WTC11 (cell line): ENCODE measurements at regions of chr4 and their contacts with region 1.

Region 1: DNA sequence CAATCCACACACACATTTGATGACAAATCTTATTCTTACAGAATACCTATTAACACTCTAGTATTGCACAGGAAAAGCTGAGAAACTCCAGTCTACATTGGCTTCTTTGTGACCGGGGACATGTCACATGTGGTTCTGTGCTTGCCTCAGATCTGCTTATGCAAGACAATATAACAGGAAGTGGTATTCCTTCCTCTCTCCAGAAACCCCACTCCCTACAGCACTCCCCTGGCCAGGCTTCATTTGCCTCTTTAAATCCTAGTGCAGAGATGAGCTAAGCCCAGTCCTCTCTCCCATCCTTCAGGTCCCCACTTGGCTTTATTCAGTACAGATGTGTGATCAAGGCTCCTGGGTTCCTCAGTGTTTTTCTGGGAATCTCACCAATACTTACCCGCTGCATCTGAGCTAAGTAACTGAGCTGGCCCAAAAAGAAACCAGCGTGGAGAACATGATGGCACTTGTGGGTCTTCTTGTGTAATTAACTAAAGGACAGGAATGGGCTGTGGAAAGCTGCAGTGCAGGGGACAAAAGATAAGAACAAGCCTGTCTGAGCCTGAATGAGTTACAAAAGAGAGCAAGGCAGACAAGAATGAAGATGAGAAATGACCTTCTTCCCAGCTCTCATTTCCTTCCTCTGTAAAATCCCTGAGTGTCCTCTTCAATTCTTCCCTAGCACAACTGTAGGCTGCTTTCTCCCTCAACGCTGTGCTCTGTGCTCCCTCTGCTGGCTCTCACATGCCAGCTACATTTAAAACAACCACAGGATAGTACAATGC is 105.6 kb downstream of the HNRNPD start:
- DNase-seq: peak; percentile 52
- ATAC-seq: peak; percentile 97
- H3K4me3 Mint-ChIP-seq: no peak overlapping the region
- H3K27ac Mint-ChIP-seq: peak overlapping the region; percentile 55
- H3K4me1 Mint-ChIP-seq: peaks cover 14% of the 10 kb centered on the region
- H3K27me3 Mint-ChIP-seq: peaks cover 6% of the 10 kb centered on the region
- CTCF ChIP-seq: peak; percentile 47; the same call in 1 of the 2 replicates

Region 2: GRCh38 chr4:81913427-81913879 is 354.8 kb before region 1 on chr4:
- CTCF ChIA-PET with region 1: interaction called, 23 read pairs
- POLR2A ChIA-PET with region 1: no interaction called
- DNase-seq: peak; percentile 79
- ATAC-seq: peak; percentile 96
- H3K4me3 Mint-ChIP-seq: peak overlapping the region; percentile 54
- H3K27ac Mint-ChIP-seq: no peak overlapping the region; the same call in 1 of the 2 replicates
- H3K4me1 Mint-ChIP-seq: peaks cover 9% of the 10 kb centered on the region
- H3K27me3 Mint-ChIP-seq: no peaks in the 10 kb centered on the region
- CTCF ChIP-seq: peak; percentile 85

Region 3: GRCh38 chr4:82217986-82218715 is 50.1 kb before region 1 on chr4:
- CTCF ChIA-PET with region 1: interaction called, 18 read pairs
- POLR2A ChIA-PET with region 1: no interaction called
- DNase-seq: no peak
- ATAC-seq: peak; percentile 48
- H3K4me3 Mint-ChIP-seq: no peak overlapping the region
- H3K27ac Mint-ChIP-seq: no peak overlapping the region
- H3K4me1 Mint-ChIP-seq: no peaks in the 10 kb centered on the region
- H3K27me3 Mint-ChIP-seq: peaks cover 23% of the 10 kb centered on the region
- CTCF ChIP-seq: no peak

Region 4: GRCh38 chr4:82256718-82257117 is 11.5 kb before region 1 on chr4:
- CTCF ChIA-PET with region 1: interaction called, 13 read pairs
- POLR2A ChIA-PET with region 1: no interaction called
- DNase-seq: no peak
- ATAC-seq: no peak
- H3K4me3 Mint-ChIP-seq: no peak overlapping the region
- H3K27ac Mint-ChIP-seq: no peak overlapping the region
- H3K4me1 Mint-ChIP-seq: no peaks in the 10 kb centered on the region
- H3K27me3 Mint-ChIP-seq: no peaks in the 10 kb centered on the region
- CTCF ChIP-seq: no peak

Region 5: DNA sequence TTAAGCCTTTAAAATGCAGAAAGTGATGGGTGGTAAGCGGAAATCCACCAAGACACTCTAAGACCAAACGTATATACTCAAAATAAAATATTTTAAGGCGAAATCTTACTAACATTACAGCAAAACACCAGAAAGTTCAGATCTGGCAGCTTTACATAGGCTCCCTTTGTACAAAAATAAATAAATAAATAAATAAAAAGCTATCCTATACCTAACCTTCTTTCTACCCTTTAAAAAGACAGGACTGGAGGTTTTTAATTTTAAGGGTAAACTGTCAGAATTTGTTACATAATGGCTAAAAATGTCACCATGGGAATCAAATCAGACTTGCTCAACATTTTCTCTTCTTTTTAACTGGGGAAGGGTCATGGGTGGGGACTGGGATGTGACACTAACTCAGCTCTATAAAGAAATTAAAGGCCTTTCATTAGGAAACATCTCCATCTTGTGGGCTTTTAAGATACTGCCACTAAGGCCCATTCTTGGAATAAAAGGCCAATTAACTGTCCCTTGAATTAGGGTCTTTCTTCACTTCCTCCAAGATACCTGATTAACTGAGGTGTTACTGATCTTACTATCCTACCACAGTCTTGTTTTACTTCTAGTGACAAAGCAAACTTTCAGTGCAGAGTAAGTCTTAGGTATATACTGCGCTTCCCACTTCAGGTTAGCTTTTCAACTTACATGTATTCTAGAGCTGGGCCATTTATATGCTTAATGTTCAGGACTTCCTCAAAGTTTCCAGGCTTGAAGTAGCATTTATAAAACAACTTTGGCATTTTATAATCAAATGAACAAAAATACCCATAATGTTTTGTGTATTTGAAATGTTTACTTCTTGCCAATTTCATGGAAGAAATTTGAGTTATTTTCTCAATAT is 92.3 kb after region 1 on chr4:
- CTCF ChIA-PET with region 1: interaction called, 21 read pairs
- POLR2A ChIA-PET with region 1: no interaction called
- DNase-seq: no peak
- ATAC-seq: peak; percentile 63
- H3K4me3 Mint-ChIP-seq: no peak overlapping the region
- H3K27ac Mint-ChIP-seq: no peak overlapping the region
- H3K4me1 Mint-ChIP-seq: peaks cover 35% of the 10 kb centered on the region
- H3K27me3 Mint-ChIP-seq: no peaks in the 10 kb centered on the region
- CTCF ChIP-seq: peak; percentile 16; the same call in 1 of the 2 replicates